ENCODE measurements at regions of chr9 and their contacts with region 1.

Region 1: DNA sequence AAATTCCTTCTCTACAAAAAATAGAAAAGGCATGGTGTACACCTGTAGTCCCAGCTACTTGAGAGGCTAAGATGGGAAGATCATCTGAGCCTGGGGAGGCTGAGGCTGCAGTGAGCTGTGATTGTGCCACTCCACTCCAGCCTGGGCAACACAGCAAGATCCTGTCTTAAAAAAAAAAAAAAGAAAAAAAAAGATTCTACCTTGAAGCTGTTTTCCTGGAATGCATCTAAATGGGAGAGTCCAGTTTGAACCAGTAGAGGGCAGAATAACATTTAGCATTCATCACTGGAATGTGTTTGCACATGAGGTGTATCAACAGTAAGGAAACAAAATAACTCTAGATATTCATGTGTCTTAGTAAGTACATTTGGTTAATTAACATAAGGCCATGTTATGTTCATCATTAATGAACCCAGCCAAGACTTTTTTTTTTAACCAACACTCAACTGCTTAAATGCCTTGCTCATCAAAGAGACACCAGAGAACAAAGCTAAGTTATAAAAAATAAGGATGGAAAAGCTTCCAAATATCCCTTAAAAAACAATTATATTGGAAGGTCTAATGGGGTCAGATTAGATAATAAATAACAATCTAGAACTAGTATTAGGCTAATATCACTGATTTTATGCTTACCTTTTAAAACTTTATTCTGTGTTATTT is 16.1 kb downstream of the IFNE start:
- DNase-seq: peak; percentile 88
- H3K4me3 ChIP-seq: no peak overlapping the region
- H3K27ac ChIP-seq: no peak overlapping the region
- H3K4me1 ChIP-seq: no peaks in the 10 kb centered on the region
- H3K27me3 ChIP-seq: no peaks in the 10 kb centered on the region
- CTCF ChIP-seq: peak; percentile 62 to 63
- POLR2A ChIP-seq: no peak

Region 2: DNA sequence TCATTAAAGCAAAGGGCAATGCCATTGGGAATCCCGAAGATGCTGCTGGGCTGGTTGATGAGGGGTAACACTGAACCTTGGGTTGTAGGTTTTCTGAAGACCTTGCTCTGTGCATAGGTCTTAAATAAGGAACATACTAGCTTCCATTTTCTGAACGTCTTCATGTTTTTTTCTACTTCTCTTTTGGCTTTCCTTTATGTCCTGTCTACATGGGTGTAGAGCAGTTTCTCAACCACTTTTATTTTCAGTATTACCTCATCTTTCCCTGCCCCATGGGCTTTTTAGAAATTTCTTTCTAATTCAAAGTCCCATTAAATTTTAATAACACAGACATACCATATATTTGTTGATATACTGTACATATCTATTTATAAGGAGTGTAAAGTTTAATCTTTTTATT is 226.1 kb before region 1 on chr9 and contains the start of gene IFNA14:
- CTCF ChIA-PET with region 1: interaction called, 13 read pairs
- POLR2A ChIA-PET with region 1: no interaction called
- dilution Hi-C with region 1: no loop called
- intact Hi-C with region 1: loop called (anchors 5 kb)
- DNase-seq: no peak
- H3K4me3 ChIP-seq: no peak within 1 kb of the TSS
- H3K27ac ChIP-seq: no peak within 1 kb of the TSS
- H3K4me1 ChIP-seq: no peaks in the 10 kb centered on the region
- H3K27me3 ChIP-seq: peaks cover 11 to 28% of the 10 kb centered on the region in 2 experiments
- CTCF ChIP-seq: no peak
- POLR2A ChIP-seq: no peak
- total RNA-seq, gene IFNA14: not detected in 2 replicates

Region 3: DNA sequence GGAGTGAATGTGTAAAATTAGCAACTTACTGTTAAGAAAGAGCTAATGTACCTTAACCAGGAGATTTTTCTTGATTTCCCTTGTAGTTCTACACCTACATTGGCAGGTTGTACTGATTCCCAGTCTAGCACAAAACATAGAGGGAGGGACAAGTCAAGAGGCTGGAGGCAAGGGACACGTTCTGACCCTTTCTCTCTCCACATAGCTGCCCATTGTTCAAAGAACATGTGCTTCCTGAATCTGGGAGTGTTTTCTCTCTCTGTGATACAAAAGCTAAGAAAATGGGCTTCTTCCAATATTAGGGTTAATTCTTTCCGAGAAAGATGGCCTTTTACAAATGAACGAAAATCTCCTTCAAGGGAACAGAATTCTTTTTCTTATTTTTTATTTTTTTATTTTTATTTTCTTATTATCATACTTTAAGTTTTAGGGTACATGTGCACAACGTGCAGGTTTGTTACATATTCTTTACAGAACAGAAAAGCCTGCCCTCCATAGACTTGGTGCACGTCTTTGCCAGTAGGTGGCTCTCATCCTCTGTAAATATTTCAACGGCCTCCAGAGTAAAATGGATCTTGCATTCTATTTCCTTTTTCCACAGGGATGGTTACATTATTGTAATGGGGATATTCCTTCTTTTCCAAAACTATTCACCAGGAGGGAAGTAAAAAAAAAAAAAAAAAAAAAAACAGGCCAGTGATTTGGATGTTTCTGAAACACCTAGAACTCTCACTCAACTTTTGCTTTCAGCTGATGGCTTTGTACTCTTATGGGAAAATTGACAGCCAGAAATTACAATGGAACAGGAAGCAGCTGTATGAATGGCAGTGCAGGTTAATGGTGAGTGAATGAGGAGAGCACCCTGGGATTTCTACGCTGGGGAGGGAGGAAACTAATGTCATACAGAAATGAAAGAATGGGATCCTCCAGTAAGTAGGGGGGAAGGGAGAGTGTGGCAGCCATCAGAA is 147.7 kb before region 1 on chr9:
- CTCF ChIA-PET with region 1: interaction called, 15 read pairs
- POLR2A ChIA-PET with region 1: no interaction called
- dilution Hi-C with region 1: no loop called
- intact Hi-C with region 1: no loop called
- DNase-seq: peak; percentile 76
- H3K4me3 ChIP-seq: no peak overlapping the region
- H3K27ac ChIP-seq: peak overlapping the region; percentile 20
- H3K4me1 ChIP-seq: peaks cover 13% of the 10 kb centered on the region
- H3K27me3 ChIP-seq: peaks cover 10 to 22% of the 10 kb centered on the region in 2 experiments
- CTCF ChIP-seq: peak; percentile 37 to 61
- POLR2A ChIP-seq: no peak

Region 4: GRCh38 chr9:21455320-21455719 is 10.7 kb before region 1 on chr9:
- CTCF ChIA-PET with region 1: interaction called, 14 read pairs
- POLR2A ChIA-PET with region 1: no interaction called
- dilution Hi-C with region 1: no loop called
- intact Hi-C with region 1: no loop called
- DNase-seq: peak; percentile 24
- H3K4me3 ChIP-seq: no peak overlapping the region
- H3K27ac ChIP-seq: no peak overlapping the region
- H3K4me1 ChIP-seq: peaks cover 8% of the 10 kb centered on the region
- H3K27me3 ChIP-seq: no peaks in the 10 kb centered on the region
- CTCF ChIP-seq: peak; percentile 47 to 69
- POLR2A ChIP-seq: no peak

Region 5: GRCh38 chr9:21770877-21771560 is 305.0 kb after region 1 on chr9:
- CTCF ChIA-PET with region 1: interaction called, 10 read pairs
- POLR2A ChIA-PET with region 1: no interaction called
- dilution Hi-C with region 1: no loop called
- intact Hi-C with region 1: no loop called
- DNase-seq: peak; percentile 85
- H3K4me3 ChIP-seq: peak overlapping the region in 1 of 3 experiments; percentile 21
- H3K27ac ChIP-seq: peak overlapping the region; percentile 67
- H3K4me1 ChIP-seq: peaks cover 13% of the 10 kb centered on the region
- H3K27me3 ChIP-seq: peaks cover 0 to 2% of the 10 kb centered on the region in 2 experiments
- CTCF ChIP-seq: no peak
- POLR2A ChIP-seq: no peak

Region 6: DNA sequence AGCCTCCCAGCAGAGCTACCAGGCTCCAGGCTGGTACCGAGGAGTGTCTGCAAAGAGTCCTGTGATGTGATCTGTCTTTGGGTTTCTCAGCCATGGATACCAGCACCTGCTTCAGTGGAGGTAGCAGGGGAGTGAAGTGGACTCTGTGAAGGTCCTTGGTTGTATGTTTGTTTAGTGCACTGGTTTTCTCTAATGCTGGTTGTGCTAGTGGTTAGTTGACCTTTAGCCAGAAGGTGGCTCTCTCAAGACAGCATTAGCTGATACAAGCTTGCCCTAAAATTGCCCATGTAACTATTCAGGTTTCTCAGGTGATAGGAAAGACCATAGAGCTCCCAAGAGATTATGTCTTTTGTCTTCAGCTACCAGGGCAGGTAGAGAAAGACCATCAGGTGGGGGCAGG is 423.7 kb after region 1 on chr9:
- CTCF ChIA-PET with region 1: no interaction called
- POLR2A ChIA-PET with region 1: no interaction called
- dilution Hi-C with region 1: no loop called
- intact Hi-C with region 1: no loop called
- DNase-seq: no peak
- H3K4me3 ChIP-seq: no peak overlapping the region
- H3K27ac ChIP-seq: no peak overlapping the region
- H3K4me1 ChIP-seq: no peaks in the 10 kb centered on the region
- H3K27me3 ChIP-seq: no peaks in the 10 kb centered on the region
- CTCF ChIP-seq: no peak
- POLR2A ChIP-seq: no peak